ENCODE measurements at regions of chr15 and their contacts with region 1.

Region 1: GRCh38 chr15:90161950-90162361 is 39.2 kb upstream of the SEMA4B start:
- DNase-seq: no peak
- H3K4me3 ChIP-seq: no peak overlapping the region
- H3K27ac ChIP-seq: no peak overlapping the region
- H3K4me1 ChIP-seq: peaks cover 17% of the 10 kb centered on the region
- H3K27me3 ChIP-seq: no peaks in the 10 kb centered on the region
- CTCF ChIP-seq: no peak

Region 2: GRCh38 chr15:90101969-90102890 is 59.7 kb before region 1 on chr15 and contains the start of gene IDH2:
- intact Hi-C with region 1: no loop called
- DNase-seq: peak; percentile 82
- H3K4me3 ChIP-seq: peak within 1 kb of the TSS; percentile 99
- H3K27ac ChIP-seq: peak within 1 kb of the TSS; percentile 98
- H3K4me1 ChIP-seq: peaks cover 77% of the 10 kb centered on the region
- H3K27me3 ChIP-seq: no peaks in the 10 kb centered on the region
- CTCF ChIP-seq: no peak
- total RNA-seq, gene IDH2: 933 TPM

Region 3: DNA sequence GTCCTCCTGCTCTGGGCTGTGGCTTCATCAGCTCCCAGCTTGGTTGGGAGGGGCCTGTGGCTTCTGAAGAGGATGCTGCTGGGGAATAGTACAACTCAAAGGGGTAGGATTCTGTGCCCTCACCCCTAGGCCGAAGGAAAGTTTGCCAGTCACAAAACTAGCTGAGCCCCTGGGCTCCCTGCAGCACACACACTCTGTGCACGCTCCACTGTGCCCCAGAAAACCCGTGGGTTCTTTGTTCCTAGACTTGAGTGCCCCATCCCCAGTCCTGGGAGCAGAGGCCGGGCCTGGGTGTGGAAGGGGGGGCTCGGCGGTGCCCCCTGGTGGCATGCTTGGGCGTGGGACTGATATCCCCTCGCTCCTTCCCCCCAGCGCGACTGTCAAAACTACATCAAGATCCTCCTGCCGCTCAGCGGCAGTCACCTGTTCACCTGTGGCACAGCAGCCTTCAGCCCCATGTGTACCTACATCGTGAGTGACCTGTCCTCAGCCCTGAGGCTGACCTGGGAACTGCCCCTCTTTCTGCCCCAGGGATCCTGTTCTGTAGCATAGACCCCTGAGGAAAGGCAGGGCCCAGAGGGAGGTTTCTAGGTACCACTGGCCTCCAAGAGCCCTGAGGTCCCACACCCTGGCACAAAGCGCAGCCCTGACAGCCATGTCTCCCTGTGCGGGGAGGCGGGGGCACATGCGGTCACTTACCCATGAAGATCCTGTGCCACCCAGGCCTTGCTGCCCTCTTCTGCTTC is 57.6 kb after region 1 on chr15:
- intact Hi-C with region 1: loop called (anchors 5 kb)
- DNase-seq: no peak
- H3K4me3 ChIP-seq: no peak overlapping the region
- H3K27ac ChIP-seq: peak overlapping the region; percentile 16
- H3K4me1 ChIP-seq: peaks cover 14% of the 10 kb centered on the region
- H3K27me3 ChIP-seq: no peaks in the 10 kb centered on the region
- CTCF ChIP-seq: peak; percentile 76

Region 4: GRCh38 chr15:90459368-90459767 is 297.4 kb after region 1 on chr15:
- intact Hi-C with region 1: no loop called
- DNase-seq: no peak
- H3K4me3 ChIP-seq: no peak overlapping the region
- H3K27ac ChIP-seq: peak overlapping the region; percentile 60
- H3K4me1 ChIP-seq: peaks cover 48% of the 10 kb centered on the region
- H3K27me3 ChIP-seq: no peaks in the 10 kb centered on the region
- CTCF ChIP-seq: no peak